Panc1 (cell line): ENCODE measurements at regions of chr15 and their contacts with region 1.

Region 1: DNA sequence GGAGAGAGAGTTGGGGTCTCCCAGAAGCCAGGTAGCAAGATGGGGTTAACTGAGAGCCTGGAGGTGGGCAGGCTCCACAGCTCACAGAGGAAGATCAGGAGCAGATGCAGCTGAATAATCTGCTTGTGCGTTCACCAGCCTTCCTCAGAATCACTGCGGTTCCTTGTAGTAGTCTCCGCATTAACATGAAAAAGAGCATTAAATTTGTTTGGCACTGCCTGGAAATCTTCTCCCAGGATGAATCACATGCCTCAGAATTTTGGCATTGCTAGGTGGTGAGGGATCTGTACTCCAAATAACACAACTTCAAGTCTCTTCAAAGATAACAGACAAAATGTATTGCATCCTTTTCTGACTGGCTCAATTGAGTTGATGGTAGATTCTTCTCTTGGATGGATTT is 700.6 kb upstream of the ARRDC4 start:
- DNase-seq: no peak
- ATAC-seq: no peak
- H3K4me3 ChIP-seq: no peak overlapping the region
- H3K27ac ChIP-seq: no peak overlapping the region
- H3K4me1 ChIP-seq: no peaks in the 10 kb centered on the region
- H3K27me3 ChIP-seq: no peaks in the 10 kb centered on the region
- CTCF ChIP-seq: no peak

Region 2: GRCh38 chr15:96264801-96265515 is 995.0 kb before region 1 on chr15:
- CTCF ChIA-PET with region 1: no interaction called
- POLR2A ChIA-PET with region 1: interaction called, 10 read pairs
- in situ Hi-C with region 1: no loop called
- intact Hi-C with region 1: no loop called
- DNase-seq: no peak
- ATAC-seq: peak; percentile 94
- H3K4me3 ChIP-seq: peak overlapping the region in 1 of 2 experiments; percentile 12; a peak in 2 of 4 replicates
- H3K27ac ChIP-seq: peak overlapping the region; percentile 86
- H3K4me1 ChIP-seq: peaks cover 49% of the 10 kb centered on the region
- H3K27me3 ChIP-seq: no peaks in the 10 kb centered on the region
- CTCF ChIP-seq: no peak